ENCODE measurements at regions of chr12 and their contacts with region 1.

Region 1: DNA sequence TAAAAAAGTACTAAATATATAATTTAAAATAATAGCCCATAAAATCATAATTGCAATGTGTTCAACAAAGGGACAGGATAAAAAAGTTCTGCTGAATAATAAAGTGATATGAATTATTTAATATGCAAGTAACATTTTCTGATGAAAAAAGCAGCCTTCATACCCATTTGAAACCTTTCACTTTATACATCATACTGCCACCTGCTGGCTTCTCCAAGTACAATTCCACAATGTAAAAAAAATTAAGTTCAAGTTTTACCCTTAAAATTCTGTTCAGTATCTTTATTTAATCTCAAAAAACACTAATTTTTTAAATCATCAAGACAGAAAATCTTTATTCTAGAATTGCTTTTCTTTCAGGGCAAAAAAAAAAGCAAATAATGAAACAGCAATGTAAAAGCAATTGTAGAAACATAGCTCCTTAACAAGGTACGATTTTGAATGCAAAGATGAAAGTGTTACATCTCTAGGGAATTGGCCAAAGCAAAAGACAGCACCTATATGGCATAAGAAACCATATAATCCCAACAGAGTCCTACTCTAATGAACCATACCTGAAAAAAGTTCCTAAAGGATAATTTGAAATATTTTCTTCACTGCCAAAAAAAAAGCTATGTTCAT is 15.0 kb downstream of the MDM1 start:
- DNase-seq: peak; percentile 49
- H3K4me3 ChIP-seq: no peak overlapping the region
- H3K27ac ChIP-seq: no peak overlapping the region
- H3K4me1 ChIP-seq: no peaks in the 10 kb centered on the region
- H3K27me3 ChIP-seq: no peaks in the 10 kb centered on the region
- CTCF ChIP-seq: peak; percentile 34 to 38
- POLR2A ChIP-seq: no peak

Region 2: DNA sequence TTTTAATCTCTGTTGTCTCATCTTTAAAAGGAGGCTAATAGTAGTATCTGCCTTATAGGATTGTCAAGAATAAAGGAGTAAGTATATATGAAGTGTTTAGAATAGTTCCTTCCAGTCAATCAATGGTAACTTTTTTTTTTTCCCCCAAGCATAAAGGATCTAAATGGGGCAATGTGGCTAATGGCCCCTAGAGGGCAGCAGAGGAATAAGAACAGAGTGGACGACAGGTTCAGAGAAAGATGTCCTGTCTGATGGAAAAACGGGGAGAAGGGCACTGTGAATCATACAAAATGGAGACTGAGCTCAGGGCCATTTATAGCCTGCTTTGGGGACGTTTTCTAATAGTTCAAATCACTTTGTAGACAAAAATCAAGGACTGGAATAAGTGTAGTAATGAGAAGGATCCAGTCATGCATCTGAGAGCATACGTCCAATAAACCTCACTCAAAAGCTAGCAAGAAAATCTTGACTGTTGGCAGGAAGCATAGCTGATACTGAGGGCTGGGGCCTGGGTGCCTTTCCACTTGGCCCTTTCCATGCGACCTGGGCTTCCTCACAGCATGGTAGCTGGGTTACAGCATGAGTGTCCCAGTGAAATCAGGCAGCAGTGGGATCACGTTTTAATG is 276.6 kb before region 1 on chr12:
- CTCF ChIA-PET with region 1: interaction called, 19 read pairs
- POLR2A ChIA-PET with region 1: no interaction called
- dilution Hi-C with region 1: no loop called
- intact Hi-C with region 1: loop called (anchors 1 kb)
- DNase-seq: peak; percentile 70
- H3K4me3 ChIP-seq: no peak overlapping the region
- H3K27ac ChIP-seq: no peak overlapping the region
- H3K4me1 ChIP-seq: no peaks in the 10 kb centered on the region
- H3K27me3 ChIP-seq: no peaks in the 10 kb centered on the region
- CTCF ChIP-seq: peak; percentile 70 to 86
- POLR2A ChIP-seq: no peak

Region 3: GRCh38 chr12:68113644-68114043 is 203.5 kb before region 1 on chr12:
- CTCF ChIA-PET with region 1: no interaction called
- POLR2A ChIA-PET with region 1: no interaction called
- dilution Hi-C with region 1: no loop called
- intact Hi-C with region 1: no loop called
- DNase-seq: no peak
- H3K4me3 ChIP-seq: no peak overlapping the region
- H3K27ac ChIP-seq: no peak overlapping the region
- H3K4me1 ChIP-seq: no peaks in the 10 kb centered on the region
- H3K27me3 ChIP-seq: no peaks in the 10 kb centered on the region
- CTCF ChIP-seq: peak; percentile 6 to 21
- POLR2A ChIP-seq: no peak

Region 4: GRCh38 chr12:68223083-68223747 is 93.9 kb before region 1 on chr12:
- CTCF ChIA-PET with region 1: interaction called, 183 read pairs
- POLR2A ChIA-PET with region 1: no interaction called
- dilution Hi-C with region 1: no loop called
- intact Hi-C with region 1: loop called (anchors 1 kb)
- DNase-seq: peak; percentile 88
- H3K4me3 ChIP-seq: no peak overlapping the region
- H3K27ac ChIP-seq: no peak overlapping the region
- H3K4me1 ChIP-seq: peaks cover 6% of the 10 kb centered on the region
- H3K27me3 ChIP-seq: peaks cover 0 to 2% of the 10 kb centered on the region in 2 experiments
- CTCF ChIP-seq: peak; percentile 84 to 86
- POLR2A ChIP-seq: no peak

Region 5: DNA sequence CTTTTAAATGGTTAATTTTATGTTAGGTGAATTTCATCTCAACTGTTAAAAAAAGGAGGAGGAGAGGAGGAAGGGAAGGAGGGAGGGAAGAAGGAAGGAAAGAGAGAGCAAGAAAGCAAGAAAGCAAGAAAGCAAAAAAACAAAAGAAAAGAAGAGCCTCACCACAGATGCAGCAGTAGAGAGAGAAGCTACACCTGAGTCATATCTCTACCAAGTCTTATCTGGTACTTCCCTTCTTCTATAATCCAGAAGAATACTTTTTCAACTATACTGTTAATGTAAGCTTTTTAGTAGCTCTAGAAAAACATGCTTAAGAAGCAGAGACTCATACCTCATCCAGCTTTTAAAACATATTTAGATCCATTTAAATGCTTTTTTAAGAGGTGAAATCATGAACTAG is 85.9 kb before region 1 on chr12:
- CTCF ChIA-PET with region 1: interaction called, 183 read pairs
- POLR2A ChIA-PET with region 1: no interaction called
- dilution Hi-C with region 1: no loop called
- intact Hi-C with region 1: no loop called
- DNase-seq: no peak
- H3K4me3 ChIP-seq: no peak overlapping the region
- H3K27ac ChIP-seq: no peak overlapping the region
- H3K4me1 ChIP-seq: no peaks in the 10 kb centered on the region
- H3K27me3 ChIP-seq: peaks cover under 1 to 5% of the 10 kb centered on the region in 2 experiments
- CTCF ChIP-seq: no peak
- POLR2A ChIP-seq: no peak

Region 6: DNA sequence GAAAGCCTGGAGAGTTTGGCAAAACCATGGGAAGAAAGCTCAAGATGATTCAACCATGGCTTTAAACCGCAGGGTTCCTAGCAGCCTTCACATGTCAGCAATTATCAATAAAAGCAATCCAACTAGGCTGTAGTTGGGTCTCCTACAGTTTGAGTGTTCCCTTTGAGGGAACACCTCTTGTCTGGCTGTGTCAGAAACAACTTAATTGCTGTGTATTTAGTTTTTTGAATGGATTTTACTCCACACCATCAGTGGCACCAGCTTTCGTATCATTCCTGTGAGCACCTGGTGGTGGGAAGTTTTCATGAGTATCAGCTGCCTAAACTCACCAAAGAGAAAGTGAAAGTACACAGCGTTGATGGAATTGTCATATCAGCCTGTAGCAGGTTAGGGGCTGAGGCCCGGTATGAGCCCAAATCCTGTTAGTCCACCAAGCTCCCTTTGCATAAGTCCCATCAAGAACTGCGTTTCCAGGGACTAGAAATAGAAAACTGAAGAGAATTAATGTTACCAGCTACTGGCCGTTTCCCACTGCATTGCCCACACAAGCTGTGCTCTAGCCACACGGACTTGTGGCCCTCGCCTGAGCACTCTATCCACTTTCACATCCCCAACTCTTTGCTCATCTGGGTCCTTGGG is 80.6 kb before region 1 on chr12:
- CTCF ChIA-PET with region 1: interaction called, 14 read pairs
- POLR2A ChIA-PET with region 1: no interaction called
- dilution Hi-C with region 1: no loop called
- intact Hi-C with region 1: no loop called
- DNase-seq: peak; percentile 20
- H3K4me3 ChIP-seq: no peak overlapping the region
- H3K27ac ChIP-seq: no peak overlapping the region
- H3K4me1 ChIP-seq: peaks cover 4% of the 10 kb centered on the region
- H3K27me3 ChIP-seq: peaks cover 1 to 3% of the 10 kb centered on the region in 2 experiments
- CTCF ChIP-seq: no peak
- POLR2A ChIP-seq: no peak

Region 7: DNA sequence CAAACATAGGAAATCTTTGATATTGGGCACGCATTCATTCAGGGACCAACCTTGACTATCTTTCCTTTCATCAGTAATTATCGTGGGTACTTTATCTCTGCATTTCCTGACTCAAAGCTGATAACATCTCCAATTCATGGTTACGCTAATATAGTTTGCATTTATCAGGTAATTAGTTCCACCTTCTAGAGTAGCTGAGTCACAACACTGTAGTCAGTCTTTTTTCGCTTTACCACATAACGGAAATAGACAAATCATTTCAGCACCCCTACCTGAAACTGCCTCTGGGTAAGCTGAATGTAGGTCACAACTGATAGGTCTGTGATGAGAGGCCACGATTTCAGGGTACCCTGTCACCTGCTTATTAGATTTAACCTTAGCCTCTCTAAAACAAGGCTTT is 27.0 kb before region 1 on chr12:
- CTCF ChIA-PET with region 1: interaction called, 11 read pairs
- POLR2A ChIA-PET with region 1: no interaction called
- dilution Hi-C with region 1: no loop called
- intact Hi-C with region 1: no loop called
- DNase-seq: no peak
- H3K4me3 ChIP-seq: no peak overlapping the region
- H3K27ac ChIP-seq: no peak overlapping the region
- H3K4me1 ChIP-seq: no peaks in the 10 kb centered on the region
- H3K27me3 ChIP-seq: no peaks in the 10 kb centered on the region
- CTCF ChIP-seq: no peak
- POLR2A ChIP-seq: no peak

Region 8: DNA sequence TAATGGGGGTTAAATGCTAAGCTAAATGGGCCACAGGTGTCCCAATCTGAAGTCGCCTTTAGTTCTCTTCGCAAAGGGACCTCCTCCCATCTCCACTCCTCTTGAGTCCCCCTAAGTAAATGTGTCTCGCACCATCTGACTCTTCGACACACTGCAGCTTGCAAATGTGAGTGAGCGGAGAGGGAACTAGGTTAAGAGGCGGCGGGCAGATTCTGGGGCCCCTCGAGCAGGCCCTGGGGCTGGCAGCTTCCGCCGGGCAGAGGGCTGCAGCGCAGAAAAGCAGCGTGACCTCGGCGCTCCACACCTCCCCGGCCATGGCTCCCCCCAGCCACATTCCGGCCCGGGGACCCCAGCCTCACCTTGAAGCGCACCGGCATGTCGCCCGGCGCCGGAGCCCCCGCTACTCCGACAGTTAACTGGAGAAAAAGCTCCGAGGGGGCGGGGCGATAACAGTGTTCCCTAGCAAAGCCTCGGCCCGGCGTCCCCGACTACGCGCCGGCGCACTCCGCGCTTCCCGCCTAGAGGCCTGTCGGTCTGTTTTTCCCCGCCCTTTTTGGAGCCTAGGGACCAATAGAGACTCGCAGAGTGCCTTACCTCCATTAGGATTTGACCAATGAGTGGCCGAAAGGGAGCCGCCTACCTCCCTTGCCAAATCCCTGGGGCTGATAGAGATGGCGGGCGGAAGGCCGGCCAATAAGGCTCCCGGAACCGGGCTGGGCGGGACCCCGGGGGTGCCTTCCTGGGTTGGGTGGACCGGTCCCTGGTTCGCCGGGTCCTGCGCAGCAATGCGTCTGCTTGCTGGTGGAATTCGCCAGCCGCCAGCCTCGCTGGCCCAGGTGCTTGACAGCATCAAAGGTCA is 14.9 kb after region 1 on chr12 and contains the start of gene MDM1:
- CTCF ChIA-PET with region 1: interaction called, 20 read pairs
- POLR2A ChIA-PET with region 1: no interaction called
- dilution Hi-C with region 1: no loop called
- intact Hi-C with region 1: no loop called
- DNase-seq: peak; percentile 98
- H3K4me3 ChIP-seq: peak within 1 kb of the TSS; percentile 57 to 93 (median 87)
- H3K27ac ChIP-seq: peak within 1 kb of the TSS; percentile 19
- H3K4me1 ChIP-seq: peaks cover 13% of the 10 kb centered on the region
- H3K27me3 ChIP-seq: peaks cover 4 to 21% of the 10 kb centered on the region in 2 experiments
- CTCF ChIP-seq: no peak
- POLR2A ChIP-seq: peak; percentile 79
- total RNA-seq, gene MDM1: 12.5 and 14.4 TPM in 2 replicates

Region 9: GRCh38 chr12:68866950-68867349 is 549.8 kb after region 1 on chr12:
- CTCF ChIA-PET with region 1: no interaction called
- POLR2A ChIA-PET with region 1: no interaction called
- dilution Hi-C with region 1: no loop called
- intact Hi-C with region 1: no loop called
- DNase-seq: no peak
- H3K4me3 ChIP-seq: no peak overlapping the region
- H3K27ac ChIP-seq: no peak overlapping the region
- H3K4me1 ChIP-seq: no peaks in the 10 kb centered on the region
- H3K27me3 ChIP-seq: peaks cover 25 to 30% of the 10 kb centered on the region in 2 experiments
- CTCF ChIP-seq: no peak
- POLR2A ChIP-seq: no peak

Measured in endothelial cell of umbilical vein (primary cell).